Posterior cingulate gyrus (tissue), 11 donors: ENCODE measurements at regions of chr3 and their contacts with region 1.

Region 1: DNA sequence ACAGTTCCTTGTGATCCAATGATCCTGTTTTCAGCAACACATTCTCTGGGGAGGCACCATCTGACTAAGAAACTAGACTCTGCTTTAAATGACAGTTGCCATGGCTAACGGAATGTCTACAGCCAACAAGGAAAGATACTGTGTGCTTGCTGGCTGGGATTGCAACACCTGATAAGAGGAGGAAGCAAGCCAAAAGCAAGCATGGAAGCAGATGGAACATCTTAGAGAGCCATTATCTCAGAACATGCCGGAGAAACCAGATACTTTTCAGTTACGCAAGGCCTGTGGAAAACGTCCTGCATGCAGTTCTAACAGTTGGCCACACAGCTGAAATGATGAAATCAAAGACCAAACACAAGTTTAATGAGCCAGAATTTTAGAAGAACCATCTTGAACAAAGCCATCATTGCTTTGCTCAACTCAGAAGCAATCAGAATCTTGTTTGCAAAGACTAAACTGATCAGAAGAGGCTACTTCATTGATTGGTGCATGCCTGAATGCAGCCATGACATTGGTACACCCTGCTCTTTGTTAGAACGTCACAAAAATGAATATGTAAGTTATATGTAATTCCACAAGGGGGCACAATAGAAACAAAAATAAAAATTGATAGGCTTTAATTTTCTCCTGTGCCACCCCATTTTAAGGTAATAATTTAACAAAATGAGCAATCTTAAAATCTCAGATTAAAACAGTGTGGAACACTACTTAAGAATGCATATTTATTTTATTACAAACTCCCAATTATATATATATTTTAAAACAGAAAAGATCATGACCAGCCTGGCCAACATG is 50.8 kb downstream of the GXYLT2 start:
- DNase-seq: peak in 1 of 10 donors; percentile 7

Region 2: GRCh38 chr3:72887705-72888545 is 50.7 kb before region 1 on chr3 and contains the start of gene GXYLT2:
- intact Hi-C with region 1: loop called (anchors 5 kb)
- DNase-seq: peak; percentile 61 to 97 (median 78)

Region 3: DNA sequence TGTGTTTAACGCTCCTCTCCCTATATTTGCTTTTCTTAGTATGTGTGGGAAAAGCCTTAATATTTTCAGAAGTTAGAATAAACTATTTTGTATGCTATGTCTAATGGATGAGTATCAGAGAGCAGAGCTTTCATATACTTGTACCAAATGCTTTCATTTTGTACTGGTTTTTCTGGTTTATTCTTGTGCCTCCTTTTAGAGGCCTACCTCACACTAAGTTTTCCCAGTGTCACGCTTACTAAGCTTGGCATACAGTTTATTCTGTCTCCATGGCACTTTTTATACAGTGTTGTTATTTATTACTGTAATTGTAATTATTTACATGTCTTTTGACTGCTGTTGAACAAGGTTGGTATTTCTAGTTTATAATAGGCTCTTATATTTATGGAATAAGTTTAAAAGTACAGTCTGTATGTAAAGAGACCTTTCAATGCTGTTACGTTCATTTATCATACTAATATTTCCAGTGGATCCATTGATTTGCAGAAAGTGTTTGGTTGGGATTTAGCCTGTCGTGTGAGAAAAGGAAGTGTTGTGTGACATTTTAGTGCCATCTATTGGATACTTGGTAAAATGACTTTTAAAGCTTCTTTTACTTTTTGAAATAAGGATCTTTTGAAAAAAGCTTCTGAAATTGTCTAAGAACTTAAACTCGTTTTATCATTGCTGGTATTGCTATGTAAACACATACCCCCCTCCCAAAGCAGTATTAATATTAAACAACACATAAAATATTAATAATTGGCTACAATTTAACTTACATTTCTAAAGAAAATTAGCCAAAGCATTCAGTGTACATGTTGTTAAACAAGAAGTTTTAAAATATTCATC is 117.6 kb after region 1 on chr3:
- intact Hi-C with region 1: loop called (anchors 1 kb)
- DNase-seq: no peak

Region 4: GRCh38 chr3:73070675-73071575 is 132.3 kb after region 1 on chr3:
- intact Hi-C with region 1: loop called (anchors 5 kb)
- DNase-seq: no peak

Region 5: DNA sequence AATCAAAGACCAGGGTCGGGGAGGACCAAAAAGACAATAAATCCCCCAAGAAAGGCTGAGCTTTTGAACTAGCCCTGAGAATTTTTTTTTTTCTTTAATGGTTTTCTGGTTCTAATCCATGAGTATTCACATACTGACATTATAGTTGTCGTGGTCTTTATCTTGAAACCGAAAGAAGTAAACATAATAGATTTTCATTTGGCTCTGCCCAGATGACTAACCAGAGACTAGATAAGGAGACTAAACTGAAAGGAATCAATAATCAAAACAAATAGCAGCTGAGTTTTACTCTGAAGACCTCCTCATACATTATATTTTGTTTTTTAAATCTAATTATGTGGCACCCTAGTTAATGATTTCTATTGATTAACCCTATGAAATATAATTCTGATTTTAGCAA is 1294.4 kb after region 1 on chr3:
- intact Hi-C with region 1: no loop called
- DNase-seq: no peak